Activated T-helper 1 cell treated with anti-CD3 and anti-CD28 coated beads, Interleukin-12 subunit alpha, Interleukin-12 subunit beta, Interleukin-2, Interleukin-4 antibody, amounts not matched to agents 30 ng/mL and 10 ng/mL and 1 ng/mL, durations not matched to agents 14 hours and 24 hours and 36 hours (primary cell): ENCODE measurements at regions of chr2 and their contacts with region 1.

Region 1: DNA sequence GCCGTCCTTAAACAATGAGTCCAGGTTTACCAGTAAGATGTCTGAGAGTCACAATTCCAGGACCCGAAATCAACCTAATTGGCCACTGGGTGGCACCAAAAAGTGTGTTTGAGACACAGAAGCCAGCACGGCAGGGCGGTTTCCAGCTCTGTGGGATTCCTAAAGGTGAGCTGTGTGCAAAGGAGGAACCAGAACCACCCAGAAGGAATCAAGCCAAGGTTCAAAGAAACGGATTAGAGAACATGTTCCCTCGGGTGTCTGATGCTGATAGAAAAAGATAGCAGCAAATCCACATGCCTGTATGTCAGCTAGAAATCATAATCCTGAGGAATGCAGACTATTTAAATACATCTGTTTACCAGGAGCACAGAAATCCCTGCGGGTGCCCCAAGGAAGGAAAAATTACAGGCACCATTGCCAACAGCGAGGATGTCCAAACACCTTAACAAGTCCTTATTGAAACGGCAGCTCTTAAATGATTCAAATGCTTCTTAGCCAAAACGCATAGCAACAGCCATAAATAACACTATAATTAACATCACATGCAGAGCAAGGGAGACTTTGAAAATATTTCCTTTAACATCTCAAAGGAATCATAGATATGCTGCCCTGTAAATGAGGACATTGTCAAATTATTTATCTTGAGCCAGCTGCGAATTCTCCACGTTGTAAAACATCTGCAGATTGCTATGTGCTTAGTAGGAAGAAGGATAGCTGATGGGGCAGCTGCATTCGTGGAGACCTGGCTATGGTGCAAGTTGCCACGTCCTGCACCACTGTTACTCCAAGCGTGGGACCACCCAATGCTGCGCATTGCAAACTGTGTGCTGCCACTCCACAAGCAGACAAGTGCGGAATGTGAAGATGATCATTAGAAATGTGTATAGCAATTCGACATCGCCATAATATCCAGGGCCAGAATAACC is 318.7 kb upstream of the NCKAP5 start:
- DNase-seq: peak; percentile 9
- H3K4me3 Mint-ChIP-seq: no peak overlapping the region
- H3K27ac Mint-ChIP-seq: no peak overlapping the region
- H3K4me1 Mint-ChIP-seq: no peaks in the 10 kb centered on the region
- H3K27me3 Mint-ChIP-seq: peaks cover 5% of the 10 kb centered on the region

Region 2: DNA sequence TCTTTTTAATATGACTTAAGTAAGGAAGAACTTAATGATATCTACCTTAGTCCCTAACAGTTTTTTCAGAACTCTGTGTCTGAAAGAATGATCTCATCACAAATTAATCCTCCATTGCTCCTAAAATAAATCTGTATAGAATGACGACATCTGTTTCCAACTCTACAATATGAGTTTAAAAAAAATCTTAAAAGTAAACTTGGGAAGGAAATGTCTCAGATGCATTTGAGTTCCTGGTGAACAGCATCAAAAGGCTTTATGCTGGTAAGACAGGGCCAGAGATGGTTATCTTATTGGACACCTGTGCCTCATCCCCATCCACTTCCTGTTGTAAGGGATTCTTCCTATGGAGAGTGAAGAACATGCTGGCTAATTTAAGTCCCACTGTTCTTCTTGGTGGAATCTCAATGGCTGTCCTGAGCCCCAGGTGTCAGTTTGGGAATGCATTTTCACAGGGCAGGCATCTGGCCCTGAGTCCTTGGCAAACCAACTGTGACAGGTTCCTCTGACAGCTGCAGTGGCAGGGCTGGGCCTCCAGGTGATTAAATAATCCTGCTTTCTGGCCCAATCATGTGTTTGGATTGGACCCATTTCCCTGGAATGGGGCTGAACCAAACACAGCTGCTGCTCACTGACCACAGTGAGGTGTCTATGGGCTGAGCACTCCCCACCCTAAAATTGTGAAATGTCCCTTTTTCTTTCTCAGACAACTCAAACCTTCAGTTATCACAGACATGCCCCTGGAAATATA is 305.8 kb before region 1 on chr2:
- intact Hi-C with region 1: no loop called
- DNase-seq: no peak
- H3K4me3 Mint-ChIP-seq: no peak overlapping the region
- H3K27ac Mint-ChIP-seq: no peak overlapping the region
- H3K4me1 Mint-ChIP-seq: no peaks in the 10 kb centered on the region
- H3K27me3 Mint-ChIP-seq: no peaks in the 10 kb centered on the region

Region 3: GRCh38 chr2:133908171-133908570 is 21.2 kb after region 1 on chr2:
- intact Hi-C with region 1: no loop called
- DNase-seq: no peak
- H3K4me3 Mint-ChIP-seq: no peak overlapping the region
- H3K27ac Mint-ChIP-seq: no peak overlapping the region
- H3K4me1 Mint-ChIP-seq: no peaks in the 10 kb centered on the region
- H3K27me3 Mint-ChIP-seq: no peaks in the 10 kb centered on the region

Region 4: DNA sequence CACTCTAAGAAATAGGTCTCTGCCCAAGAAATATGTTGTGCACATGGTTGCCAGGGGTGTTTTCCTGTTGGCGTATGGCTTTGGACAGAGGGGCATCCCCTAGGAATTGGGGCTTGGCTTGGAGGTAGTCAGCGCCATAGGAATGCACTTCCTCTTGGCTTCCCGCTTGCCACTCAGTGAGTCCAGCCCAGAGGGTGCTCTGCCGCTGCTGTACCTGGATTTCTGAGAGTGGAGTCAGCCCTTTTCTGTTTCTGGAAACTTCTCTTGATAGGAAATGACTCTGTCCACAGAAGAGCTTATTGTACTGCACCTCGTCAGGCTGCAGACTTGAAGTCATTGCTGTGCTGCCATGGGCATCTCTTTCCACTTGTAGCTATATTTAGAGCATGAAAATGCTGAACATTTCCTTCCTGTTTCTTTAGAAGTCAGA is 250.2 kb after region 1 on chr2:
- intact Hi-C with region 1: no loop called
- DNase-seq: no peak
- H3K4me3 Mint-ChIP-seq: no peak overlapping the region
- H3K27ac Mint-ChIP-seq: peak overlapping the region; percentile 54
- H3K4me1 Mint-ChIP-seq: peaks cover 27% of the 10 kb centered on the region
- H3K27me3 Mint-ChIP-seq: peaks cover 2% of the 10 kb centered on the region

Region 5: DNA sequence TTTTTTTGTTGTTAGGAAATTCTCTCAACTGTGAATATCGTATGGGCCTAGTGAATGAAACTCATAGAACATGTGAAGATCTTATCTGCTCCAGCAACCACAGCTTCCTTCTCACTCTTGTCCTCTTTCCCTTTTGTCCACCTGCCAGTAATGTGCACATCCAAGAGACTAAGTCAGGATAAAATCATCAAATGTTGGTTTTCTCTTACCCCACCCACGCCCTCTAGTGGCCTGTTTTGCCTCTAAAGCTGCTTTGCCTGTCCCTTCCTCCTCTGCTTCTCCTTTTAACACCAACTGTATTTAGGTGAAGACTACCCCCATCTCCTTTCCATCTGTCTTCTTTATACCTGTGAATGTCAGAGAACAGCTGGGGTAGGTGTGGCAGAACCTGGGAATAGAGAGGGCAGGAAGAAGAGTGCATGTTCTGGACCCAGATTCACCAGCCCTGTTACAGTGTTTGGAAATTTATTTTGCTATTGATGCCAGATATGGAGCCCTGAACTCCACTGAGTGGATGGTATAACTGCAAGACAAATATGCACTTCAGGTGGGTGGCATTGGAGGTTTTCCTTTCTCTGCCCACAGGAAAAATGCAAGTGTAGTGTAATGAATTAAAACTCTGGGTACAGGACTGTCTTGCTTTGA is 358.5 kb after region 1 on chr2:
- intact Hi-C with region 1: loop called (anchors 5 kb)
- DNase-seq: peak; percentile 54
- H3K4me3 Mint-ChIP-seq: no peak overlapping the region
- H3K27ac Mint-ChIP-seq: no peak overlapping the region
- H3K4me1 Mint-ChIP-seq: peaks cover 51% of the 10 kb centered on the region
- H3K27me3 Mint-ChIP-seq: peaks cover 12% of the 10 kb centered on the region

Region 6: DNA sequence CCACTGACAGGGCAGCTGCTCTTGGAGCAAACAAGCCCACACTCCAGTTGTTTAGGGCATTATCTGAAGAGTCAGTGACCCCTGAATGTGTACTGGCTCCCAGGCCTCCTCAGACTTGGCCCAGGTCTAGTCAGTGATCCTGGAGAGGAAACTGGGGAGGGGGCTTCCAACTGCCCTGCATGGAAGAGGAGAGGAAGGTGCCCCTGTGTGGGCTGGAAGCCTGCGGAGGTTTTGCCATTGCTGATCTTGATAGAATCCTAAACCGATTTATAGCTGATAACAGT is 564.3 kb after region 1 on chr2:
- intact Hi-C with region 1: loop called (anchors 2 kb)
- DNase-seq: no peak
- H3K4me3 Mint-ChIP-seq: no peak overlapping the region
- H3K27ac Mint-ChIP-seq: no peak overlapping the region
- H3K4me1 Mint-ChIP-seq: no peaks in the 10 kb centered on the region
- H3K27me3 Mint-ChIP-seq: no peaks in the 10 kb centered on the region